ENCODE measurements at regions of chr2 and their contacts with region 1.

Region 1: GRCh38 chr2:184646177-184646576 is 47.8 kb downstream of the ZNF804A start:
- DNase-seq: peak; percentile 74
- H3K4me3 Mint-ChIP-seq: peak overlapping the region; percentile 46
- H3K27ac Mint-ChIP-seq: peak overlapping the region; percentile 56
- H3K4me1 Mint-ChIP-seq: peaks cover 33% of the 10 kb centered on the region
- H3K27me3 Mint-ChIP-seq: no peaks in the 10 kb centered on the region
- CTCF ChIP-seq: no peak

Region 2: GRCh38 chr2:184577743-184578142 is 68.4 kb before region 1 on chr2:
- CTCF ChIA-PET with region 1: no interaction called
- intact Hi-C with region 1: no loop called
- DNase-seq: no peak
- H3K4me3 Mint-ChIP-seq: no peak overlapping the region
- H3K27ac Mint-ChIP-seq: no peak overlapping the region
- H3K4me1 Mint-ChIP-seq: no peaks in the 10 kb centered on the region
- H3K27me3 Mint-ChIP-seq: no peaks in the 10 kb centered on the region
- CTCF ChIP-seq: no peak

Region 3: DNA sequence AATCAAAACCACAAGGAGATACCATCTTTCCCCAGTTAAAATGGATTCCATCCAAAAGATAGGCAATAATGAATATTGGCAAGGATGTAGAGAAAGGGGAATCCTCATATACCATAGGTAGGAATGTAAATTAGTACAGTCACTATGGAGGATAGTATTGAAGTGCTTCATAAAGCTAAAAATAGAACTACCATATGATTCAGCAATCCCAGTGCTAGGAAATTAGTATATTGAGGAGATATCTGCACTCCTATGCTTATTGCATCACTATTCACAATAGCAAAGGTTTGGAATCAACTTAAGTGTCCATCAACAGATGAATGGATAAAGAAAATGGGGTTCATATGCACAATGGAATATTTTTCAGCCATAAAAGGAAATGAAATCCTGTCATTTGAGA is 203.3 kb after region 1 on chr2:
- CTCF ChIA-PET with region 1: no interaction called
- intact Hi-C with region 1: no loop called
- DNase-seq: no peak
- H3K4me3 Mint-ChIP-seq: no peak overlapping the region
- H3K27ac Mint-ChIP-seq: no peak overlapping the region
- H3K4me1 Mint-ChIP-seq: no peaks in the 10 kb centered on the region
- H3K27me3 Mint-ChIP-seq: no peaks in the 10 kb centered on the region
- CTCF ChIP-seq: no peak

Region 4: DNA sequence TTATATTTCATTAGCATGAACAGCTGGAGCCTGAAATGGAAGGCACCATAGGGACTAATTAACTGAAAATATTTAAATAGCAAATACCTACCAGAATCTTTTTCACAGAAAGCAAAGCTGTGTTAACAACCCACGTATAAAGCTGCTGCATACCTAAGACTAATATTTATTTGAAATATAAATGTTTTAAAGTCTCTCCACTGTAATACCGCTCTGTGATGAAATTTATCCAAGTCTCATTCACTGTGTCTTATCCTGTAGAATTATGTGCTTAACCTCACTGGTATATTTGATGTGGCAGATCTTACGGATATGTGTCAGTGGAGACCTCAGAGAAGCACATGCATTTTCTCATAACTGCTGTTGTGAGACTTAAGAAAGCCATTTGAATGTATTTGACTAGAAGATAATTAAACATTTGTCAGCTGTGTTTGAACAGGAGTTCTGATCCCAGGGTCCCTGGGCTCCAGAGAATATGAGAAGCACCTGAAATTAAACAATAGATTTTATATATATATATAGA is 325.4 kb after region 1 on chr2:
- CTCF ChIA-PET with region 1: no interaction called
- intact Hi-C with region 1: loop called (anchors 10 kb)
- DNase-seq: no peak
- H3K4me3 Mint-ChIP-seq: no peak overlapping the region
- H3K27ac Mint-ChIP-seq: no peak overlapping the region
- H3K4me1 Mint-ChIP-seq: no peaks in the 10 kb centered on the region
- H3K27me3 Mint-ChIP-seq: no peaks in the 10 kb centered on the region
- CTCF ChIP-seq: no peak